ENCODE measurements at regions of chr6 and their contacts with region 1.

Region 1: DNA sequence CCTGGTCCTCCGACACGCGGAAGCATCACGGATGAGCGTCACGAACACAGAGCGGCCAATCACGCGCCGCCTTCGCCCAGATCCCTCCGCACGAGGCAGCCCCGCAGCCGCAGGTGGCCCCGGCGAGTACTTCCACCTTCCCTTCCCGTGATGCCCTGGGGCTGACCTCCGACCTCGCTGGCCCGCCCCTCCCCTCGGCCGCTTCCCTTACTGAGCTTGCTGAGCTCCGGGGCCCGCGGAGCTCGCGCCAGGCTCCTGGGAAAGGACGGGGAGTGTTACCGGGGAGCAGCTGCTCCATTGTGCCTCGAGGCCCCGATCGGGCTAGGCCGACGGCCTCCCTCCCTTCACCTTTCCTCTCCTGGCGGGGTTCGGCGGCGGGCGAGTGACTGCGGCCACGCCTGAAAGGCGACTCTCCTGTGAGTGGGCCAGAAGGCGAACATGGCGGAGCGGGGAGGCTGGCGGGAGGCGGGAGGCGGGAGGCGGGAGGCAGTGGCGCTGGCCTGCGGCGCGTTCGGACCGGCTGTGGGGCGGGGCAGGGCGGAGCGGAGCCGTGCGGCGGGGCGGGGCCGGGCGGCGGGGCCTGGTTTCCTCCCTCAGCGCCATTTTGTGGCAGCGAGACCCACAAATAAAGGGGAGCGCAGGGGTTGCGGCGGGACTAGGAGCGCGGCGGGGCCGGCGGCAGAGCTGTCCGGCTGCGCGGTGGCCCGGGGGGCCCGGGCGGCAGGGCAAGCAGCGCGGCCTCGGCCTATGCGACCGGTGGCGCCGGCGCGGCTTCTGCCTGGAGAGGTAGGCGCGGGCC is at the start of gene WTAP:
- DNase-seq: peak in 1 of 2 donors; percentile 98
- H3K4me3 ChIP-seq: peak within 1 kb of the TSS; percentile 79
- H3K27ac ChIP-seq: peak within 1 kb of the TSS; percentile 97
- H3K4me1 ChIP-seq: peaks cover 46% of the 10 kb centered on the region
- H3K27me3 ChIP-seq: no peaks in the 10 kb centered on the region
- CTCF ChIP-seq: no peak
- POLR2A ChIP-seq: peak in 1 of 2 donors; percentile 90
- total RNA-seq, gene WTAP: 85.0 TPM

Region 2: DNA sequence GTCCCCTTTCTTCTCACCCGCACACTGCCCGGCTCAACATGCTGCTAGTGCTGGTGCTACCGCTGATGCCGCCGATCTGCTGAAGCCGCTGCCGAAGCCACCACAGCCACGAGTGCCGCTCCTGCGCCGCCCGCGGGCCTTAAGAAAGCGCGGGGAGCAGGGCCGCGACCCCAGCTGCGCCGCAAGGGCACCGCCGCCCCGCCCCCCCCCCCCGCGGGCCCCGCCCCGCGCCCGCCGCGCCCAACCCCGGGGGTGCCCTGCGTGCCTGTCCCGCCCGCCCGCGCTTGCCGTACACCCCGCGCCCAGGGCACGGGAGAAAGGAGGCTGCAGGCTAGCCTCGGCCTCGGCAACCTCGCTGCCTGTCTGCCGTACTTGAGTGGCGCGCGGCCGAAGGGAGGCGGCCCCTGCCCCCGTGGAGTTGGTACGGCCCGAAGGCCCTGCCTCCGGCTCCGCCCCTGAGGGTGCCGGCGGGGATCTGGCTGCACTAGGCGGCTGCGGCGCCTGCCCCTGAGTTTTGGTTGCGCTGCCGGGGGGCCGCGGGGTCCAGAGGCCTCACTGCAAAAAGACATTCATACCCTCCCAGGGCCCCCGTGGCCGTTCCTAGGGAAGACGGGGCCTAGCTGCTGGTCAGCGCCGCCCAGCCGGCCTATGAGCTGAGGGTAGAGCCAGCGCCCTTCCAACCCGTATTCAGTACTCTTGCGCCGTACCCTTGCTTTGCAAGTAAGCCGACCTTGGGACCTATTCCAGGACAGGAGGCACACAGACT is 33.8 kb before region 1 on chr6 and contains the start of gene SOD2:
- intact Hi-C with region 1: loop called (anchors 2 kb)
- DNase-seq: peak in 1 of 2 donors; percentile 94
- H3K4me3 ChIP-seq: peak within 1 kb of the TSS; percentile 89 to 97
- H3K27ac ChIP-seq: peak within 1 kb of the TSS; percentile 99
- H3K4me1 ChIP-seq: peaks cover 43% of the 10 kb centered on the region
- H3K27me3 ChIP-seq: no peaks in the 10 kb centered on the region
- CTCF ChIP-seq: peak in 1 of 3 experiments; percentile 8
- POLR2A ChIP-seq: peak; percentile 31 to 92
- total RNA-seq, gene SOD2: 597 TPM

Region 3: DNA sequence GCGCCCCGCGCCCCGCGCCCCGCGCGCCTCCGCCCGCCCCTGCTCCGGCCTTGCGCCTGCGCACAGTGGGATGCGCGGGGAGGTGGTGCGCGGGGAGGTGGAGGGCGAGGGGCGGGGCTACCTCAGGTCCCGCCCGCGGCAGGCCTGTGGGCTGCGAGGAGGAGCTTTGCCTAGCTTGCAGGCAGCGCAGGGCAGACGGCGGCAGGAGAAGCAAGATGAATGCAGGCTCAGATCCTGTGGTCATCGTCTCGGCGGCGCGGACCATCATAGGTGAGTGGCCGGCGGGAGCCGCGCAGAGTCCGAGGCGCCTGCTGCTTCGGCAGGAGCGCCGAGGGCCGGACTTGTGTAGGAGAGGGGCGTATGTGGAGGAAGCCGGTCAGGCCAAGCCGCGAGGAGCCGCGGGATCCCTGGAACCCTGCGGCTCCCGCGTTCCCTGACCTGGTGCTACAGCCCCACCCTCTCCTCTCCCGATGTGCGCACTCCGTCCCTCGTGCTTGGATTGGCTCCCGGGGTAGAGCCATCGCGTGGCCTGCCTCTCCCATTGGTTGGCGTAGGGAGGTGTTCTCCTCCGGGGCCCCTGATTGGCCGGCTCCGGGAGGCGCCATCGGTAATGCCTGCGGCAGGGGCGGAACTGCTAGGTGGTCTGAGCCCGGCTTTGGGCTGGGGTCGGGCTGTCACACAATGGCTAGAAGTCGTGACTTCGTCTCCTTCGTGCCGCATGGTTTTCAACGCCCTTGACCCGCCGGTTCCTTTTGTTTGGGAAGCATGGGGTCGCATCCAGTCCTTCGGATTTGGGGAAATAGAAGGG is 35.0 kb after region 1 on chr6 and contains the start of gene ACAT2:
- intact Hi-C with region 1: loop called (anchors 5 kb)
- DNase-seq: peak in 1 of 2 donors; percentile 98
- H3K4me3 ChIP-seq: peak within 1 kb of the TSS; percentile 60 to 79
- H3K27ac ChIP-seq: peak within 1 kb of the TSS; percentile 98
- H3K4me1 ChIP-seq: peaks cover 25% of the 10 kb centered on the region
- H3K27me3 ChIP-seq: no peaks in the 10 kb centered on the region
- CTCF ChIP-seq: peak in 1 of 3 experiments; percentile 21
- POLR2A ChIP-seq: peak in 1 of 2 donors; percentile 48
- total RNA-seq, gene ACAT2: 11.3 TPM

Region 4: GRCh38 chr6:159789377-159790148 is 62.4 kb after region 1 on chr6 and contains the start of gene TCP1:
- intact Hi-C with region 1: loop called (anchors 5 kb)
- DNase-seq: peak; percentile 99 to 100
- H3K4me3 ChIP-seq: peak within 1 kb of the TSS; percentile 87 to 92
- H3K27ac ChIP-seq: peak within 1 kb of the TSS; percentile 100
- H3K4me1 ChIP-seq: peaks cover 73% of the 10 kb centered on the region
- H3K27me3 ChIP-seq: no peaks in the 10 kb centered on the region
- CTCF ChIP-seq: no peak
- POLR2A ChIP-seq: peak in 1 of 2 donors; percentile 98
- total RNA-seq, gene TCP1: 80.8 TPM

Region 5: GRCh38 chr6:160065200-160065599 is 338.1 kb after region 1 on chr6:
- intact Hi-C with region 1: no loop called
- DNase-seq: no peak
- H3K4me3 ChIP-seq: no peak overlapping the region
- H3K27ac ChIP-seq: no peak overlapping the region
- H3K4me1 ChIP-seq: no peaks in the 10 kb centered on the region
- H3K27me3 ChIP-seq: no peaks in the 10 kb centered on the region
- CTCF ChIP-seq: no peak
- POLR2A ChIP-seq: no peak